ENCODE measurements at regions of chr5 and their contacts with region 1.

Region 1: GRCh38 chr5:143403593-143404415 is at the start of gene NR3C1:
- DNase-seq: peak; percentile 81 to 89 (median 85)
- H3K4me3 ChIP-seq: peak within 1 kb of the TSS; percentile 86
- H3K27ac ChIP-seq: peak within 1 kb of the TSS; percentile 79 to 90
- H3K4me1 ChIP-seq: peaks cover 16% of the 10 kb centered on the region
- H3K27me3 ChIP-seq: no peaks in the 10 kb centered on the region
- CTCF ChIP-seq: peak in 2 of 3 donors; percentile 40 to 46
- EP300 ChIP-seq: no peak
- POLR2A ChIP-seq: no peak
- total RNA-seq, gene NR3C1: 26.2 to 54.3 (median 40.2) TPM

Region 2: DNA sequence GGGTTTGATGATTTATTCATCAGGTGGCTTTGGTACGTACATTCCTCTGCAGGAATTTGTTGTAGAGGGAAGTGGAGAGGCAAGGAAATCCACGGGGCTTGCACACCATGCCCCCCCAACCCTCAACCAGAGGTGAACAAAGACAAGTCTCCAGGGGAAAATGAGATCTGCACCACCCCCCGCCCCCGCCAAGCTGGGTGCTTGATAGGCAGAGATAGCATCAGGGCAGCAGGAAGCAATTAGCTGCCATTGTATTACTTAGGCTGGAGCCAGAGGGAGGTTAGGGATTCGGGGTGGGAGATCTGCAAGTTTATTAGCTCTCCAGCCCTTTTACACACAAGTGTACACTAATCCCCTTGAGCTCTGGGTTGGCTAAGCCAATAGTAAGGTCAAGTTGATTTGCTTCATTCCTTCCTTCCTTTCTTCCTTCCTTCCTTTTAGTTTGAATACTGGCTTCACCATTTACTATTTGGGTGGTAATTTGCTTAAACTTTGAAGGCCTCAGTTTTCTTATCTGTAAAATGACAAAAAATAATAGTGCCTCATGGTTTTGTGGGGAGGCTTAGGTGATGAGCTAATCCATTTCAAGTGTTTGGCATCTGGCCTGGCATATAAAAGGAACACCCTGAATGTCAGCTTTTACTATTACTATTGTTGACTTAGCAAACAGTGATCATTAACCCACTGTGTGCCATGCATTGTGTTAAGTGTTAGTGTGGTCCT is 1113.1 kb before region 1 on chr5:
- intact Hi-C with region 1: no loop called
- DNase-seq: no peak
- H3K4me3 ChIP-seq: no peak overlapping the region
- H3K27ac ChIP-seq: no peak overlapping the region
- H3K4me1 ChIP-seq: no peaks in the 10 kb centered on the region
- H3K27me3 ChIP-seq: no peaks in the 10 kb centered on the region
- CTCF ChIP-seq: no peak
- EP300 ChIP-seq: no peak
- POLR2A ChIP-seq: no peak

Region 3: GRCh38 chr5:142611154-142611553 is 792.6 kb before region 1 on chr5:
- intact Hi-C with region 1: loop called in 1 of 4 experiments (anchors 10 kb)
- DNase-seq: peak; percentile 60 to 83 (median 76)
- H3K4me3 ChIP-seq: no peak overlapping the region
- H3K27ac ChIP-seq: no peak overlapping the region
- H3K4me1 ChIP-seq: no peaks in the 10 kb centered on the region
- H3K27me3 ChIP-seq: no peaks in the 10 kb centered on the region
- CTCF ChIP-seq: peak; percentile 60 to 84 (median 71)
- EP300 ChIP-seq: no peak
- POLR2A ChIP-seq: no peak

Region 4: GRCh38 chr5:142922223-142922952 is 481.4 kb before region 1 on chr5:
- intact Hi-C with region 1: loop called in 1 of 4 experiments (anchors 5 kb)
- DNase-seq: no peak
- H3K4me3 ChIP-seq: no peak overlapping the region
- H3K27ac ChIP-seq: no peak overlapping the region
- H3K4me1 ChIP-seq: no peaks in the 10 kb centered on the region
- H3K27me3 ChIP-seq: no peaks in the 10 kb centered on the region
- CTCF ChIP-seq: peak in 2 of 3 donors; percentile 47 to 49
- EP300 ChIP-seq: no peak
- POLR2A ChIP-seq: no peak

Region 5: GRCh38 chr5:143002459-143003328 is 401.1 kb before region 1 on chr5:
- intact Hi-C with region 1: loop called in 1 of 4 experiments (anchors 10 kb)
- DNase-seq: no peak
- H3K4me3 ChIP-seq: no peak overlapping the region
- H3K27ac ChIP-seq: peak overlapping the region in 1 of 2 donors; percentile 36
- H3K4me1 ChIP-seq: peaks cover 7% of the 10 kb centered on the region
- H3K27me3 ChIP-seq: no peaks in the 10 kb centered on the region
- CTCF ChIP-seq: peak in 2 of 3 donors; percentile 42 to 45
- EP300 ChIP-seq: no peak
- POLR2A ChIP-seq: no peak

Region 6: GRCh38 chr5:143023411-143024096 is 380.2 kb before region 1 on chr5:
- intact Hi-C with region 1: loop called in 1 of 4 experiments (anchors 5 kb)
- DNase-seq: peak in 4 of 5 donors; percentile 10 to 42 (median 24)
- H3K4me3 ChIP-seq: no peak overlapping the region
- H3K27ac ChIP-seq: no peak overlapping the region
- H3K4me1 ChIP-seq: peaks cover 5% of the 10 kb centered on the region
- H3K27me3 ChIP-seq: no peaks in the 10 kb centered on the region
- CTCF ChIP-seq: no peak
- EP300 ChIP-seq: no peak
- POLR2A ChIP-seq: no peak

Region 7: GRCh38 chr5:143896966-143897365 is 493.2 kb after region 1 on chr5:
- intact Hi-C with region 1: no loop called
- DNase-seq: no peak
- H3K4me3 ChIP-seq: no peak overlapping the region
- H3K27ac ChIP-seq: no peak overlapping the region
- H3K4me1 ChIP-seq: no peaks in the 10 kb centered on the region
- H3K27me3 ChIP-seq: no peaks in the 10 kb centered on the region
- CTCF ChIP-seq: no peak
- EP300 ChIP-seq: no peak
- POLR2A ChIP-seq: no peak

Measured in ovary (tissue), 10 donors.